Endothelial cell of umbilical vein (primary cell): ENCODE measurements at regions of chr7 and their contacts with region 1.

Region 1: GRCh38 chr7:24401628-24402593 is 117.9 kb downstream of the NPY start:
- DNase-seq: peak; percentile 51
- H3K4me3 ChIP-seq: no peak overlapping the region
- H3K27ac ChIP-seq: no peak overlapping the region
- H3K4me1 ChIP-seq: no peaks in the 10 kb centered on the region
- H3K27me3 ChIP-seq: no peaks in the 10 kb centered on the region
- CTCF ChIP-seq: peak; percentile 9 to 37
- POLR2A ChIP-seq: no peak

Region 2: GRCh38 chr7:24422441-24423010 is 20.6 kb after region 1 on chr7:
- CTCF ChIA-PET with region 1: no interaction called
- POLR2A ChIA-PET with region 1: no interaction called
- dilution Hi-C with region 1: no loop called
- intact Hi-C with region 1: no loop called
- DNase-seq: no peak
- H3K4me3 ChIP-seq: no peak overlapping the region
- H3K27ac ChIP-seq: no peak overlapping the region
- H3K4me1 ChIP-seq: no peaks in the 10 kb centered on the region
- H3K27me3 ChIP-seq: no peaks in the 10 kb centered on the region
- CTCF ChIP-seq: no peak
- POLR2A ChIP-seq: no peak

Region 3: DNA sequence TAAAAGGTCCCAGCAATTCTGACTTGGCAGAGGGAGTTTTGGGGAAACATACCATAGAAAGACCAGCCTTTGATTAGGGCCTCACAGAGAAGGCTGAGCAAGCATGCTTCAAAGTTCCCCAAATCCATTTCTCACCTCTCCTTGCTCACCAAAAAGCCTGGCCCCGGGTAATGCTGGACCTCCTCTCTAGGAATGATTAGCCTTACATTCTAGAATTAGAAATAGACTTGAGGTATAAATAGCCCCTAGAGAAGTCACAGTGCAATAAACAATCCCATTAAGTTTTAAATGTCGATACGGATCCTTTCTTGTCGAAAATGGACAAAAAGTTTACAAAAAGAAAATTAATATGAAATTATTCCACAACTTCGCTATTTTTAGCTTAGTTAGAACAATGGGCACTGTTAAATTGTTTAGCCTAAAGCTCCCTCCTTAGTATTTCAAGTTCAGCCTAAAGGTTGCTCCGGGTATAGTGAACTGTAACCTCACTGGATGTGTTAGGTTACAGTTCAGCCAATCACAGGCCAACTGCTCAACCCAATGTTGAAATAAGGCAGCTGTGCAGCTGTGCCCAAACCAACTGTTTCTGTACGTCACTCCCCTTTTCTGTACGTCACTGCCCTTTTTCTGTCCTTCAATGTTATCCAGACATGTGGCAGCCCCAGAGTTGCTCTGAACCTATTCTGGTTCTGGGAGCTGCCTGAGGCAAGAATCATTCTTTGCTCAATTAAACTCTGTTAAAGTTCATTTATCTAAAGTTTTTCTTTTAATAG is 363.2 kb after region 1 on chr7:
- CTCF ChIA-PET with region 1: interaction called, 4 read pairs
- POLR2A ChIA-PET with region 1: no interaction called
- dilution Hi-C with region 1: no loop called
- intact Hi-C with region 1: loop called (anchors 5 kb)
- DNase-seq: no peak
- H3K4me3 ChIP-seq: no peak overlapping the region
- H3K27ac ChIP-seq: no peak overlapping the region
- H3K4me1 ChIP-seq: no peaks in the 10 kb centered on the region
- H3K27me3 ChIP-seq: peaks cover 14 to 17% of the 10 kb centered on the region in 2 experiments
- CTCF ChIP-seq: no peak
- POLR2A ChIP-seq: no peak

Region 4: GRCh38 chr7:25098096-25099046 is 696.5 kb after region 1 on chr7:
- CTCF ChIA-PET with region 1: interaction called, 4 read pairs
- POLR2A ChIA-PET with region 1: no interaction called
- dilution Hi-C with region 1: no loop called
- intact Hi-C with region 1: loop called (anchors 1 kb)
- DNase-seq: peak; percentile 73
- H3K4me3 ChIP-seq: no peak overlapping the region
- H3K27ac ChIP-seq: no peak overlapping the region
- H3K4me1 ChIP-seq: peaks cover 2% of the 10 kb centered on the region
- H3K27me3 ChIP-seq: peaks cover 0 to 1% of the 10 kb centered on the region in 2 experiments
- CTCF ChIP-seq: peak; percentile 79 to 93
- POLR2A ChIP-seq: no peak